ENCODE measurements at regions of chr7 and their contacts with region 1.

Region 1: GRCh38 chr7:37448636-37449361 is at the start of gene ELMO1:
- DNase-seq: peak; percentile 45 to 47
- ATAC-seq: peak; percentile 55 to 70
- H3K4me3 ChIP-seq: peak within 1 kb of the TSS; percentile 62 to 78 (median 68)
- H3K27ac ChIP-seq: peak within 1 kb of the TSS; percentile 80 to 84 (median 82)
- H3K4me1 ChIP-seq: no peaks in the 10 kb centered on the region
- H3K27me3 ChIP-seq: peaks cover 8 to 26% (median 11%) of the 10 kb centered on the region in 3 donors
- CTCF ChIP-seq: peak in 4 of 5 experiments; percentile 30 to 48 (median 40)
- POLR2A ChIP-seq: peak; percentile 25 to 55
- total RNA-seq, gene ELMO1: 8.4 to 18.9 (median 14.6) TPM

Region 2: GRCh38 chr7:37284805-37285231 is 164.0 kb before region 1 on chr7:
- in situ Hi-C with region 1: no loop called
- intact Hi-C with region 1: loop called (anchors 10 kb)
- DNase-seq: peak; percentile 13 to 41
- ATAC-seq: peak in 1 of 2 donors; percentile 33
- H3K4me3 ChIP-seq: no peak overlapping the region
- H3K27ac ChIP-seq: peak overlapping the region in 1 of 4 donors; percentile 44
- H3K4me1 ChIP-seq: peaks cover 0 to 33% of the 10 kb centered on the region in 2 donors
- H3K27me3 ChIP-seq: no peaks in the 10 kb centered on the region
- CTCF ChIP-seq: peak in 3 of 5 experiments; percentile 46 to 56 (median 54)
- POLR2A ChIP-seq: no peak

Region 3: GRCh38 chr7:37352974-37353948 is 95.5 kb before region 1 on chr7:
- in situ Hi-C with region 1: no loop called
- intact Hi-C with region 1: loop called (anchors 10 kb)
- DNase-seq: peak in 1 of 2 donors; percentile 18
- ATAC-seq: no peak
- H3K4me3 ChIP-seq: peak overlapping the region in 1 of 4 donors; percentile 9
- H3K27ac ChIP-seq: peak overlapping the region; percentile 70 to 78 (median 72)
- H3K4me1 ChIP-seq: peaks cover 9 to 25% of the 10 kb centered on the region in 2 donors
- H3K27me3 ChIP-seq: no peaks in the 10 kb centered on the region
- CTCF ChIP-seq: no peak
- POLR2A ChIP-seq: no peak

Measured in gastrocnemius medialis (tissue), 4 donors.